Cardiac septum (tissue), 1 donor: ENCODE measurements at regions of chr19 and their contacts with region 1.

Region 1: GRCh38 chr19:1767464-1767933 is 14.2 kb downstream of the ONECUT3 start:
- DNase-seq: no peak

Region 2: GRCh38 chr19:1523412-1524291 is 243.8 kb before region 1 on chr19 and contains the start of gene PLK5:
- intact Hi-C with region 1: no loop called
- DNase-seq: no peak
- total RNA-seq, gene PLK5: not detected

Region 3: DNA sequence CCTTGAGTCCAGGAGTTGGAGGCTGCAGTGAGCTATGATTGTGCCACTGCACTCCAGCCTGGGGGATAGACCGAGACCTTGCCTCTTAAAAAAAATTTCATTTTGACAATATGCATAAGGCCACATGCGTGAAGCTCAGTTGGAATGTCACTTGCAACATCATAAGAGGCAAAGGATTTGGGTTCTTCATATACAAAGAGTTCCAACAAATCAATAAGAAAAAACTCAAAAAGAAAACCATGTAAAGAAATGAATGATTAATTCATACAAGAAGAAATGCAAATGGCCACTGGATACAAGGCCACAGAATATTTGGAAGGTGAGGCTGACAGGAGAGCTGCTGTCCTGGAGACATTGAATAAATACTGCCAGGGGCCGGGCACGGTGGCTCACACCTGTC is 105.5 kb before region 1 on chr19:
- intact Hi-C with region 1: no loop called
- DNase-seq: no peak

Region 4: GRCh38 chr19:1672038-1672768 is 95.3 kb before region 1 on chr19:
- intact Hi-C with region 1: loop called (anchors 5 kb)
- DNase-seq: no peak

Region 5: GRCh38 chr19:1780272-1780958 is 12.9 kb after region 1 on chr19:
- intact Hi-C with region 1: no loop called
- DNase-seq: no peak

Region 6: GRCh38 chr19:2084993-2085720 is 317.7 kb after region 1 on chr19:
- intact Hi-C with region 1: no loop called
- DNase-seq: peak; percentile 95